ENCODE measurements at regions of chr7 and their contacts with region 1.

Region 1: DNA sequence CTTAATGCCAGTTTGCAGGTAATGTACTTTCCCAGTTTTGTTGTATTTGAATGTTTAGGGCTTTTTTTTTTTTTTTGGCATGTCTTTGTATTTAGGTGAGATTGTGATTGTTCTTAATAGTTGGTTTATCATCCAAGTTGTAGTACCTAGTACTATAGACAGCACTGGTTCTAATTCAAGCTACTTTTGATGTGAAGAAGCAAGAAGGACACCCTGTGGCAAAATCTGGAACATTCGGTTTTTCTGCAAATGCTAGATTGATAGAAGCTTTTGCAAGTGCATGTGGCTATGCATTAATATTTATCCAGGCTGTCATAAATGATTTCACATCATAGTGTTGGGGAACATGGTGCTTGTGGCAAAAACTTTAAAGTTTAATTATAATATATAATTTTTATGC is 248.9 kb downstream of the FOXP2 start:
- DNase-seq: peak; percentile 35
- H3K4me3 ChIP-seq: no peak overlapping the region
- H3K27ac ChIP-seq: no peak overlapping the region
- H3K4me1 ChIP-seq: no peaks in the 10 kb centered on the region
- H3K27me3 ChIP-seq: no peaks in the 10 kb centered on the region
- CTCF ChIP-seq: peak in 1 of 2 donors; percentile 30
- POLR2A ChIP-seq: no peak

Region 2: GRCh38 chr7:114026486-114027089 is 636.9 kb before region 1 on chr7:
- CTCF ChIA-PET with region 1: interaction called, 19 read pairs
- POLR2A ChIA-PET with region 1: no interaction called
- dilution Hi-C with region 1: no loop called
- intact Hi-C with region 1: loop called (anchors 1 kb)
- DNase-seq: peak; percentile 64
- H3K4me3 ChIP-seq: no peak overlapping the region
- H3K27ac ChIP-seq: no peak overlapping the region
- H3K4me1 ChIP-seq: no peaks in the 10 kb centered on the region
- H3K27me3 ChIP-seq: no peaks in the 10 kb centered on the region
- CTCF ChIP-seq: peak; percentile 24 to 36
- POLR2A ChIP-seq: no peak

Region 3: GRCh38 chr7:114310345-114311110 is 353.0 kb before region 1 on chr7:
- CTCF ChIA-PET with region 1: interaction called, 14 read pairs
- POLR2A ChIA-PET with region 1: no interaction called
- dilution Hi-C with region 1: no loop called
- intact Hi-C with region 1: no loop called
- DNase-seq: no peak
- H3K4me3 ChIP-seq: no peak overlapping the region
- H3K27ac ChIP-seq: no peak overlapping the region
- H3K4me1 ChIP-seq: no peaks in the 10 kb centered on the region
- H3K27me3 ChIP-seq: no peaks in the 10 kb centered on the region
- CTCF ChIP-seq: no peak
- POLR2A ChIP-seq: no peak

Region 4: DNA sequence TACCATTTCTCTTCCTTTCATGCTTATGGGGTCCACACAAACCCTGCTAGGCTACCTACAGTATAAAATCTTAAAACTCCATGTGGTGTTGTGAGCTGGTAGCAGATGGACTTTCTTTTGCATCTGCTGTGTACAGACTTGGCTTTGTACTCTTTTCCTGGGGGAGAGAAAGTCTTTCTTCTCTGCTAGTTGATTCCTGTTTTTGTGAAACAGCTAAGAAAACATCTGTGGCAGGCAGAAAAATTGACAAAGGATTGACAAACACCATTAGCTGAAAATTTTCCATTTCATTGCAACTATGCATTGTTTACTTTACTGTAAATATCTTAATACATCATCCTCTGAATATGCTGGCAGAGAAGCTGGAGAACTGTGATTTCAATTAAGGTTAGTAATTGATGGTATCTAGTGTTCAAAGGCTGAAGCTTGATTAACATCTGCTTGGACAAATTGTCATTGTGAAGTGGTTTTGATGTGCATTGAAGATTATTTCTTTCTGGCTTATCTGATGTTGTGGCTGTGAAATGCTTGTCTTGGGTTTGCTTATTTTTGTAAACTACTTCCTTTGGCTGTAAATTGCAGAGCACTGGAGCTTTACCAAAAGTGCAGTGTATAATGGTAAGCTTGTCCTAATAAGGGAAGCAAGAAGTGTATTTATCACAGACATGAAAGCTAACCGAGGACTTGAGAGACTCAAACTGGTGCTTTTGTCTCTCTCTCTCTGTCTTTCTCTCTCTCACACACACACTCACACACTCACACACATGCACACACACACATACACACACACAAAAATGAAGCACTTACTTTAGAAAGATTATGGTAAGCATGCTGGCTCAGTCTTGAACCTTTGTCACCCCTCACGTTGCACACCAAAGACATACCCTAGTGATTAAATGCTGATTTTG is 249.1 kb before region 1 on chr7 and contains the start of gene FOXP2:
- CTCF ChIA-PET with region 1: interaction called, 12 read pairs
- POLR2A ChIA-PET with region 1: no interaction called
- dilution Hi-C with region 1: no loop called
- intact Hi-C with region 1: no loop called
- DNase-seq: peak; percentile 19
- H3K4me3 ChIP-seq: peak within 1 kb of the TSS in 1 of 3 experiments; percentile 46
- H3K27ac ChIP-seq: no peak within 1 kb of the TSS
- H3K4me1 ChIP-seq: no peaks in the 10 kb centered on the region
- H3K27me3 ChIP-seq: peaks cover 2% of the 10 kb centered on the region in 2 experiments
- CTCF ChIP-seq: no peak
- POLR2A ChIP-seq: no peak
- total RNA-seq, gene FOXP2: 2.7 and 3.3 TPM in 2 replicates

Region 5: DNA sequence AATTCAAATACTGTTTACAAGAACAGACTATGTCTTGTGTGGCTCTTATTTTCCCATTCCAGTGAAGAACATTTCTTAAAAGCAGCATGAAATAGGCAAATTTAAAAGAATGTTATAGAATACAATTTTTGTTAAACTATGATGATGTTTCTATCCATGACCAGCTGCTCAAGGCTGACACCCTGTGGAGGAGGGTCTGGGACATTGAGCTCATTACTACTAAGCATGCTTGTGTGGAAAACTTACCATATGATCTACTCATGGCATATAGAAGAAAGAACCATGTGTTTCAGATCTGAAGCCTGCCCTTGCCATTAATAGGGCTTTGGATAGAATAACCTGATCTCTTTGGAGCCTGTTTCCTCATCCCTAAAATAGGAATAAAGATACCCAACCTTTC is 123.9 kb before region 1 on chr7:
- CTCF ChIA-PET with region 1: interaction called, 10 read pairs
- POLR2A ChIA-PET with region 1: no interaction called
- dilution Hi-C with region 1: no loop called
- intact Hi-C with region 1: no loop called
- DNase-seq: peak; percentile 53
- H3K4me3 ChIP-seq: no peak overlapping the region
- H3K27ac ChIP-seq: no peak overlapping the region
- H3K4me1 ChIP-seq: no peaks in the 10 kb centered on the region
- H3K27me3 ChIP-seq: no peaks in the 10 kb centered on the region
- CTCF ChIP-seq: peak in 1 of 2 donors; percentile 43
- POLR2A ChIP-seq: no peak